ENCODE measurements at regions of chr6 and their contacts with region 1.

Region 1: GRCh38 chr6:130872250-130873095 is 45.3 kb downstream of the SMLR1 start:
- DNase-seq: peak; percentile 71
- H3K4me3 Mint-ChIP-seq: no peak overlapping the region
- H3K27ac Mint-ChIP-seq: no peak overlapping the region
- H3K4me1 Mint-ChIP-seq: no peaks in the 10 kb centered on the region
- H3K27me3 Mint-ChIP-seq: no peaks in the 10 kb centered on the region
- CTCF ChIP-seq: peak; percentile 85

Region 2: DNA sequence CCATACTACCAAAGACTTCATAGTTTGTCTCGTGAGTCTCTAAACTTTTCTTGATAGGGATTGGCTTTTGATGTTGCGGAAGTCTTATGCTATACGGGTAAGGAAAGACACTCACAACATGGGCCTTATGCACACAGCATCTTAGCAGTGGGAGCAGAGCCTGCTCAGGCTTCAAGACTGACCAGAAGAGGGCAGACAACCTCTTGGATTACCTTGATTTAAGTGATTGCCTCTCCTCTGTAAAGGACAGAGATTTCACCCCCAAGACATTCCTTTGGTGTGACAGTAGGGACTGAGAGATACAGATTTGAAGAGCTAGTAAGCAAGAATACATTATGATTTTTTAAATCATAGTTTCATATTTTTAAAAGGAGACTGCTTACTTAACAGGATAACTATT is 578.7 kb before region 1 on chr6:
- CTCF ChIA-PET with region 1: interaction called, 9 read pairs
- POLR2A ChIA-PET with region 1: no interaction called
- intact Hi-C with region 1: loop called (anchors 1 kb)
- DNase-seq: peak; percentile 66
- H3K4me3 Mint-ChIP-seq: no peak overlapping the region
- H3K27ac Mint-ChIP-seq: no peak overlapping the region
- H3K4me1 Mint-ChIP-seq: no peaks in the 10 kb centered on the region
- H3K27me3 Mint-ChIP-seq: peaks cover 7% of the 10 kb centered on the region
- CTCF ChIP-seq: peak; percentile 46

Region 3: DNA sequence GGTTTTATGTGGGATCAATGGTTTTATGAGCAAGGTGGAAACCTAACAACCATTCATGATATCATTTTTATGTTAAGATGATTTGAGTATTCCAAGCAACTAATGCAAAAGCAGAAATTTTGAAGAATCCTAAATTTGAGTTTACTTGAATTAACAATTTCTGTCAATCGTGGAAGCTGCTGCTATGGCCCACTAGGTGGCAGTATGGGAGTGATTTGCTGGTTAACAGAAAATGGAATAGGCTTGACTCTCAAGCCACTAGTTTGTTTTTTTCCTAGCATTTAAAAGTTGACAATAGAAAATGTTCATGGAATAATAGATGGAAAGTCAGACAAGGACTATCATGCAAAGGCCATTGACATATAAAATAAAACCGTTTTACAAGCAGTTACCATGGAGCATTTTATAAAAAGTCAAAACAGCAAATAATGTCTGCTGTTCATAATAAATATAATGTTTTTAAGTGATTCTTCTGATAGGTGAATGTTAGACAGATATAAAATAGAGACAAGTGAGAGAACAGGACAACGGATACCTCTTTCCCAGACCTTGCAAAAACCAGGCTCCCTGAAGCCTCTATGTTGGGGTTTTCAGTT is 549.7 kb before region 1 on chr6:
- CTCF ChIA-PET with region 1: interaction called, 6 read pairs
- POLR2A ChIA-PET with region 1: no interaction called
- intact Hi-C with region 1: loop called (anchors 1 kb)
- DNase-seq: peak; percentile 64
- H3K4me3 Mint-ChIP-seq: no peak overlapping the region
- H3K27ac Mint-ChIP-seq: no peak overlapping the region
- H3K4me1 Mint-ChIP-seq: peaks cover 9% of the 10 kb centered on the region
- H3K27me3 Mint-ChIP-seq: peaks cover 24% of the 10 kb centered on the region
- CTCF ChIP-seq: peak; percentile 78

Region 4: DNA sequence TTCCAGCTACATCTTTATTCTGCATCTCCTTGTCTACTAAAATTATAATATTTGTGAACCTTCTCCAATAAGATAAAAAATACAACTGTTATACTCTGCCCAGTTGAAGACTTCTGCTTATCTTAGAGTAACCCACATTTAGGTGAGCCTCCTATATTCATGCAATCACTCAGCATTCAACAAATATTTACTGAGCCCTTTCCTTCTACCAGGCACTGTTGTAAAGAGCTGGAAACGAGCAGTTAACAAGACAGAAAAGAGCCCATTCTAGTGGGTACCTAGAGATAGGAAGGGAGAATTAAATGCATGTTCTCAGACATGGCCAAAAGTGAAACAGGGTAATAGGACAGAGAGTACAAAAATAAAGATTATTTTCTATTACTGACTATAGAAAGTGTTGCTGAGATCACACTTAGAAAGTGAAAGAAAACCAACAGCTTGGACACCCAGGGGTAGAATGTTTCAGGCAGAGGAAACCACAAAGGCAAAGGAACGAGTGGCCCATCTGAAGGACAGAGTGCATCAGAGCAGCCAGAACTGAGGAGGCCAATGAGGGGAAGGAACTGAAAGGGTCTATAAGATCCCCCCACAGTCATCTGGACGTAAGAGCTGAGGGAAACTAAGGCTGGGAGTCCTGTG is 96.1 kb before region 1 on chr6:
- CTCF ChIA-PET with region 1: no interaction called
- POLR2A ChIA-PET with region 1: no interaction called
- intact Hi-C with region 1: no loop called
- DNase-seq: no peak
- H3K4me3 Mint-ChIP-seq: no peak overlapping the region
- H3K27ac Mint-ChIP-seq: no peak overlapping the region
- H3K4me1 Mint-ChIP-seq: no peaks in the 10 kb centered on the region
- H3K27me3 Mint-ChIP-seq: peaks cover 7% of the 10 kb centered on the region
- CTCF ChIP-seq: no peak

Region 5: GRCh38 chr6:130836055-130836640 is 36.3 kb before region 1 on chr6:
- CTCF ChIA-PET with region 1: no interaction called
- POLR2A ChIA-PET with region 1: no interaction called
- intact Hi-C with region 1: no loop called
- DNase-seq: no peak
- H3K4me3 Mint-ChIP-seq: no peak overlapping the region
- H3K27ac Mint-ChIP-seq: no peak overlapping the region
- H3K4me1 Mint-ChIP-seq: peaks cover under 1% of the 10 kb centered on the region
- H3K27me3 Mint-ChIP-seq: no peaks in the 10 kb centered on the region
- CTCF ChIP-seq: no peak

Region 6: GRCh38 chr6:130858498-130859160 is 13.8 kb before region 1 on chr6:
- CTCF ChIA-PET with region 1: interaction called, 48 read pairs
- POLR2A ChIA-PET with region 1: no interaction called
- intact Hi-C with region 1: no loop called
- DNase-seq: no peak
- H3K4me3 Mint-ChIP-seq: no peak overlapping the region
- H3K27ac Mint-ChIP-seq: no peak overlapping the region
- H3K4me1 Mint-ChIP-seq: peaks cover 11% of the 10 kb centered on the region
- H3K27me3 Mint-ChIP-seq: no peaks in the 10 kb centered on the region
- CTCF ChIP-seq: no peak

Region 7: GRCh38 chr6:131116749-131117360 is 244.4 kb after region 1 on chr6:
- CTCF ChIA-PET with region 1: interaction called, 13 read pairs
- POLR2A ChIA-PET with region 1: no interaction called
- intact Hi-C with region 1: no loop called
- DNase-seq: peak; percentile 69
- H3K4me3 Mint-ChIP-seq: no peak overlapping the region
- H3K27ac Mint-ChIP-seq: no peak overlapping the region
- H3K4me1 Mint-ChIP-seq: peaks cover 5% of the 10 kb centered on the region
- H3K27me3 Mint-ChIP-seq: no peaks in the 10 kb centered on the region
- CTCF ChIP-seq: peak; percentile 51